SK-N-SH (cell line): ENCODE measurements at regions of chr16 and their contacts with region 1.

Region 1: GRCh38 chr16:3029537-3030402 is 5.9 kb downstream of the THOC6 start:
- DNase-seq: peak; percentile 67
- H3K4me3 ChIP-seq: peak overlapping the region in 1 of 2 experiments; percentile 12; a peak in 1 of 4 replicates
- H3K27ac ChIP-seq: no peak overlapping the region
- H3K4me1 ChIP-seq: peaks cover 0 to 2% of the 10 kb centered on the region in 2 experiments; a peak in 1 of 4 replicates
- H3K27me3 ChIP-seq: peaks cover 32% of the 10 kb centered on the region
- CTCF ChIP-seq: no peak
- EP300 ChIP-seq: no peak
- RAD21 ChIP-seq: no peak

Region 2: DNA sequence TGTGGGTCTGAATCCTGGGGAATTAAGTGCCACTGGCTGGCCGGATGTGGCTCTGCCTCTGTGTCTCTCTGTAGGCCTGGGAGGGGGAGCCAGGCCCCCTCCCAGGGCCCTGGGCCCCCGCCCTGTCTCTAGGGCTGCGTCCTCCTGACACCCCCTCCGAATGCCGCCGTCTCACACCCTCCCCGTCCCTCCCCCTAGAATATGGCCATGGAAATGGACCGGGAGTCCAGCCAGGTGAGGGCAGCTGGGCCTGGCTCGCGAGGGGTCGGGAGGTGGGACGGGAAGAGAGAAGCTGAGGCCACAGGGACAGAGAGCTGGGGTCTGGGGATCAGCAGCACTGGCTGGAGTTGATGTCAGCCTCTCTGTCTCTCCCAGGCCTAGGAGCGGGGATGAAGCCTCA is 33.5 kb before region 1 on chr16:
- CTCF ChIA-PET with region 1: interaction called, 62 read pairs
- POLR2A ChIA-PET with region 1: no interaction called
- DNase-seq: no peak
- H3K4me3 ChIP-seq: no peak overlapping the region
- H3K27ac ChIP-seq: no peak overlapping the region
- H3K4me1 ChIP-seq: no peaks in the 10 kb centered on the region
- H3K27me3 ChIP-seq: no peaks in the 10 kb centered on the region
- CTCF ChIP-seq: no peak
- EP300 ChIP-seq: no peak
- RAD21 ChIP-seq: no peak

Region 3: DNA sequence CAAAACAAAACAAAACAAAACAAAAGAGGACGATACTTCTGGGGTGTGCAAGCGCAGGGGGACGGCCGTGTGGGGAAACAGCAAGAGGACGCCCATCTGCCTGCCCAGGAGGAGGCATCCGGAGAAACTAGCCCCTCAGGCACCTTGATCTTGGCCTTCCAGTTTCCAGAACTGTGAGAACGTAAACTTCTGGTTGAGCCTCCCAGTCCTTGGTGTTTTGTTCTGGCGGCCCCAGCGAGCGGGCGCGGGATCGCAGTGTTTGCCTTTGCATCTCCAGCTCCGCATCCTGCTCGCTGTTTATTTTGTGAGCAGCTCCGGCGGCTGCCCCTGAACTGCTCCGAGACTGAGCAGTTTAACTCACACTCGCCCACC is 15.6 kb after region 1 on chr16:
- CTCF ChIA-PET with region 1: interaction called, 141 read pairs
- POLR2A ChIA-PET with region 1: interaction called, 5 read pairs
- DNase-seq: no peak
- H3K4me3 ChIP-seq: peak overlapping the region; percentile 33; a peak in 3 of 4 replicates
- H3K27ac ChIP-seq: no peak overlapping the region
- H3K4me1 ChIP-seq: no peaks in the 10 kb centered on the region; a peak in 1 of 4 replicates
- H3K27me3 ChIP-seq: peaks cover 78% of the 10 kb centered on the region
- CTCF ChIP-seq: no peak
- EP300 ChIP-seq: no peak
- RAD21 ChIP-seq: no peak

Region 4: DNA sequence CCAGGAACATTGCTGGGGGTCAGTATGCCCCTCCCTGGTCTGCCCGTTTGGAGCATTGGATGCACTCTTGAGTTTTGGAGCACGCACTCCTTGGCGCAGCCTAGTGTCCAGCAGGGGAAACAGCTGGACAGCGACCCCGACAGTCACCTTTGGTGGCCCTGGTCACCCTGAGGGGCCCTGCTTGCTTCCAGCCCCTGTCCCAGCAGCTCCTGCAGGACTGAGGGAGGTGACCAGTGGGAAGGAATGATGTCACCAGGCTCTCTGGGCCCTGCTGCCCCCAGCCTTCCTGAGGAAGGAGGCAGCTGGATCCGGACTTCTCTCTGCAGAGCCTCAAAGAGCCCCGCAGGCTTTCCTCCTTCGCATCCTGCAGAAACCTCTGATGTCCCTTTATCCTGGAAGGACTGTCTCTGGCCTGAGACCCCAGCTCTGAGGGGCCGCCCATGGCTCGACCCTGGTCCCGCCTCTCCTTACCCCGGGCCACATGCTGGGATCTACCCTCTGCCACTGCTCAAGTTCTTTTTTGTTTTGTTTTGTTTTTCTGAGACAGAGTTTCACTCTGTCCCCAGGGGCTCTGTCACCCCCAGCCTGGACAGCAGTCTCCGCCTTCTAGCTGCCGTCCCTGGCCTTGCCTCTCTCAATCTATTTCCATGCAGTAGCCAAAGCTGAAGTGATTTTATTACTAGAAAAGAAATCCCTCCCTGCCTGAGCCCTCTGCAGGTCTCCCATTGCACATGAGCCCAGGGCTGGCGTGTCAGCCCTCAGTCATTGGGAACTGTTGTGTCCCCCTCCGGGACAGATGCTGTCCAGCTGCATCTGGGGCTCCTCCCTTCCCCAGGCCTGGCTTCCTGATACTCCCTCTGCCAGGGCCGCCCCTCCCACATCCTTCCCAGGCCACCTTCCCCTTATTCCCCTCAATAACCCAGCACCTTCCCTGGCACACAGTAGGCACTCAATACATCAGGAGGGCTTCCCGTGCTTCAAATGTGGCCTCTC is 57.8 kb after region 1 on chr16:
- CTCF ChIA-PET with region 1: interaction called, 15 read pairs
- POLR2A ChIA-PET with region 1: no interaction called
- DNase-seq: no peak
- H3K4me3 ChIP-seq: no peak overlapping the region
- H3K27ac ChIP-seq: no peak overlapping the region
- H3K4me1 ChIP-seq: no peaks in the 10 kb centered on the region; a peak in 1 of 4 replicates
- H3K27me3 ChIP-seq: peaks cover 58% of the 10 kb centered on the region
- CTCF ChIP-seq: no peak; the same call in 1 of the 2 replicates
- EP300 ChIP-seq: no peak
- RAD21 ChIP-seq: no peak

Region 5: DNA sequence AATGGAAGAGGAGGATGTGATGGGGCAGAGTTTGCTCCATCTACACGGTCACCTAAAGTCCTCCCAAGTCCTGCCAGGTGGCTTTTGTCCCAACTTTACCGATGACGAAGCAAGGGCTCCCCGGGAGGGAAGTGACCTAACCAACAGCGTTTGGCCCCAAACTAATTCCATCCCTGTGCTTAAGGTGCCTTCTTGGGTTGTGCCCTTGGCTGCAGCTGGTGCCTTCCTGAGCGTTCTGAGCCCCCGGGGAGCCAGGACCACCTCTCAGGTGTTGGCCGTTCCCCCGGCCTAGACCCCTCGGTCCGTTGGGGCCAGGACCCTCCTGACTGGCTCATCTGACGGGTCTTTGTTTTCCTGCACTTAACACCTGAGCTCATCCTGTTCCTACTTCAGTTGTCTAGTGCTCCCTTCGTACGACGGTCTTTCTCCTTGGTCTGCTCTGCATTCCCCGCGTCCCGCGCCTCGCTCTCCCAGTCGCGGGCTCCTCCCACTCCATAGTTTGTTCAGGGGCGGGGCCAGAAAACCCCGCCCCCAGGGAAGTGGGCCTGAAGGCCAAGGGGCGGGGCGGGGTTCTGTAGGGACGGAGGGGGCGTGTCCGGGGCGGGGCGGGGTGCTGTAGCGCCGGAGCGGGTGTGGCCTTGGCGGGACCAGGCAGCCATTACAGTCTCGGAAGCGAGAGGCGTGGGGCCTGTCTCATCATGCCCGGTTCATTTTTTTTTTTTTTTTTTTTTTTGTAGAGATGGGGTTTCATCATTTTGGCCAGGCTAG is 70.1 kb after region 1 on chr16:
- CTCF ChIA-PET with region 1: interaction called, 15 read pairs
- POLR2A ChIA-PET with region 1: no interaction called
- DNase-seq: peak; percentile 98
- H3K4me3 ChIP-seq: no peak overlapping the region
- H3K27ac ChIP-seq: no peak overlapping the region
- H3K4me1 ChIP-seq: peaks cover 9 to 11% of the 10 kb centered on the region in 2 experiments; a peak in 2 of 4 replicates
- H3K27me3 ChIP-seq: no peaks in the 10 kb centered on the region
- CTCF ChIP-seq: no peak
- EP300 ChIP-seq: no peak
- RAD21 ChIP-seq: no peak